Heart right ventricle (tissue), 16 donors: ENCODE measurements at regions of chr6 and their contacts with region 1.

Region 1: GRCh38 chr6:34027445-34027936 is 118.4 kb downstream of the GRM4 start:
- DNase-seq: peak; percentile 9 to 49
- ATAC-seq: peak; percentile 32 to 75 (median 65)
- H3K4me3 ChIP-seq: no peak overlapping the region
- H3K27ac ChIP-seq: no peak overlapping the region
- H3K4me1 ChIP-seq: no peaks in the 10 kb centered on the region
- H3K27me3 ChIP-seq: peaks cover 0 to 73% (median 27%) of the 10 kb centered on the region in 7 donors
- CTCF ChIP-seq: peak; percentile 41 to 88 (median 73)

Region 2: DNA sequence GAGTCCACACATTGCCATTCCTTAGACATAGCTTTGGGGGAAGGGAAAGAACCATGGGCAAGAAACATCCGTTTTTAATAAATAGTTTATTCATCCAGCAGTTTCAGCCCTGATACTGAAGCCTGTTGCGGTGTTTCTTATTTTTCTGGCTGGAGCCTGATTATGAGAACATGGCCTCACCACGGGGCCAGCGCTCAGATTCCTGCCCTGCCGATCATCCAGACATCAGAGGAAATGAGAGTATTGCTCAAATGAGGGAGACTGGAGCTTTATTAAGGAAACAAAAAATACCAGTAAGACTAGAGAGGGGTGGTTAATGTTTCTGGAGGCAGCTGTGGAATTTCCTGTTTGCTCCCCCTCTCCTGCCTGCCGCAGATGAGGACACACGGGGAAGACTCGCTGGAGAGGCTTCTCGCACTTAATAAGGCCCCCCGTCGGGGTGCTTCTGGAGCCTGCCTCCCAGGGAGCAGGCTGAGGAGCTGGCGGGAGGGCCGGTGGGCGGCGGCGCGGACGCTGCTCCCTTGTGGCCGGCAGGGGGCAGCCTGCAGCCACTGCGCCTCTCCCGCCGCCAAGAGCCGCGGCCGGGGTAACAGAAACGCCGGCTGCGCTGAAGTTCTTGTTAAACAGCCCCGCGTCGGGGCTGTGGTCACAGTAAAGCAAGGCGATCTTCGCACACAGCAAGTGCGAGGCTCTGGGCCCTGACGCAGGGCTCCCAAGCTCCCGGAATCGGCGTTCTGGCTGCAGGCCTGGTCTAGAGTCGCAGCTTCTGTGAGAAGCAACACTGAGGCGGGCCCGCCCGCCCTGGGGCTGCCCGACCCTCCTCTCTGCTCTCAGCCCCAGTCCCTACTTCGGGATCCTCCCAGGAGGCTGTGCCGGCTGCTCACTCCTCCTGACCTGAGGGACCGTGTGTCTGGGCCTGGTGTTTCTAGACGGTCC is 256.1 kb before region 1 on chr6:
- intact Hi-C with region 1: loop called (anchors 2 to 5 kb)
- DNase-seq: peak; percentile 50 to 73
- ATAC-seq: peak; percentile 70 to 89 (median 82)
- H3K4me3 ChIP-seq: peak overlapping the region in 4 of 10 donors; percentile 10 to 38 (median 16)
- H3K27ac ChIP-seq: peak overlapping the region in 9 of 10 donors; percentile 8 to 69 (median 48)
- H3K4me1 ChIP-seq: peaks cover 11 to 42% (median 26%) of the 10 kb centered on the region in 9 donors
- H3K27me3 ChIP-seq: peaks cover 0 to 3% (median 0%) of the 10 kb centered on the region in 7 donors
- CTCF ChIP-seq: peak; percentile 93 to 99 (median 97)